ENCODE measurements at regions of chr4 and their contacts with region 1.

Region 1: GRCh38 chr4:183504064-183504929 is 561 bp upstream of the ING2 start:
- DNase-seq: peak; percentile 98
- H3K4me3 ChIP-seq: peak overlapping the region; percentile 75 to 92 (median 76)
- H3K27ac ChIP-seq: peak overlapping the region; percentile 86
- H3K4me1 ChIP-seq: peaks cover 18% of the 10 kb centered on the region
- H3K27me3 ChIP-seq: no peaks in the 10 kb centered on the region
- CTCF ChIP-seq: peak; percentile 1 to 4
- POLR2A ChIP-seq: peak; percentile 58

Region 2: GRCh38 chr4:183098723-183099536 is 405.4 kb before region 1 on chr4 and contains the start of gene WWC2:
- CTCF ChIA-PET with region 1: no interaction called
- POLR2A ChIA-PET with region 1: no interaction called
- dilution Hi-C with region 1: no loop called
- intact Hi-C with region 1: loop called (anchors 10 kb)
- DNase-seq: peak; percentile 94
- H3K4me3 ChIP-seq: peak within 1 kb of the TSS; percentile 80 to 90 (median 83)
- H3K27ac ChIP-seq: peak within 1 kb of the TSS; percentile 99
- H3K4me1 ChIP-seq: peaks cover 24% of the 10 kb centered on the region
- H3K27me3 ChIP-seq: no peaks in the 10 kb centered on the region
- CTCF ChIP-seq: no peak
- POLR2A ChIP-seq: peak; percentile 68
- total RNA-seq, gene WWC2: 51.8 and 52.2 TPM in 2 replicates

Region 3: GRCh38 chr4:183205709-183206108 is 298.6 kb before region 1 on chr4:
- CTCF ChIA-PET with region 1: no interaction called
- POLR2A ChIA-PET with region 1: no interaction called
- dilution Hi-C with region 1: no loop called
- intact Hi-C with region 1: no loop called
- DNase-seq: no peak
- H3K4me3 ChIP-seq: no peak overlapping the region
- H3K27ac ChIP-seq: no peak overlapping the region
- H3K4me1 ChIP-seq: peaks cover 6% of the 10 kb centered on the region
- H3K27me3 ChIP-seq: no peaks in the 10 kb centered on the region
- CTCF ChIP-seq: no peak
- POLR2A ChIP-seq: no peak

Region 4: DNA sequence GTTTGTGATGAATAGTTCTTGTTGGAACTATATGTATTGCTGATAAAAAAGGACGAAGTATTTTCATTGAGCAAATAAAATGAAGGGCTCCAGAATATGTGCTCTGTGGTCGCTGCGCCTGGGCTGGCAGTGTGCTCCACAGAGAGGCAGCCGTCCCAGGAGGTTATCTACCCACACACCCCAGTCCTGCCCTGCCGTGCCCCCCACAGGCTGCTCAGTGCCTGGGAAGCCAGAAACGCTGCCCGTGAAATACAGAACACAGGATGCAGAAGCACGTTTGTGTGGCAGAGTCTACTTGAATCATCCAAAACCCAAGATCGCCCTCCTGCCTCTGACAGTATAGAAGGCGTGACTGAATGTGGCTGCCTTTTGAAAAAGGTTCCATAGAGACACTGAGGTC is 185.6 kb before region 1 on chr4:
- CTCF ChIA-PET with region 1: no interaction called
- POLR2A ChIA-PET with region 1: no interaction called
- dilution Hi-C with region 1: no loop called
- intact Hi-C with region 1: no loop called
- DNase-seq: no peak
- H3K4me3 ChIP-seq: no peak overlapping the region
- H3K27ac ChIP-seq: no peak overlapping the region
- H3K4me1 ChIP-seq: no peaks in the 10 kb centered on the region
- H3K27me3 ChIP-seq: no peaks in the 10 kb centered on the region
- CTCF ChIP-seq: no peak
- POLR2A ChIP-seq: no peak

Region 5: DNA sequence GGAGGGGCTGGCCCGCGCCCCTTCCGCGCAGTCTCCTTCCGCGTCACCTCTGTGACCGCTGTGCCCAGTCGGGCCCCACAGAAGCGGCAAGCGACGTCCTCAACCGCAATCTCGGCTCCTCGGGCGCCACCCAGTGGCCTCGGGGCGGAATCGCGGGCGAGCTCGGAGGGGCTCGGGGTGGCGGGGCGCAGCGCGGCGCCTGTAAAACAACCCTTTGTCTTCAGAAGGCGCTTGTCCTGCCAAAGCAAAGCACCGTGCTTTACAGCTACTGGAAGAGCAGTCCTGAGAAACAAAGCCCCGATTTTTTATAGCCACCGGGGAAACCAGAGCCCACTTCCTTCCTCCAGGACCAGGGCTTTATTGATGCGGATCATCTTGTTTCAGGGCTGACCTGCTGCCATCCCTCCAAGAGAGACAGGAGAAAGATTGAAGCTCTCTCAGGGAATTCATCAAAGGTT is 97.1 kb before region 1 on chr4:
- CTCF ChIA-PET with region 1: no interaction called
- POLR2A ChIA-PET with region 1: no interaction called
- dilution Hi-C with region 1: no loop called
- intact Hi-C with region 1: loop called (anchors 1 kb)
- DNase-seq: peak; percentile 90
- H3K4me3 ChIP-seq: peak overlapping the region; percentile 28 to 70 (median 33)
- H3K27ac ChIP-seq: peak overlapping the region; percentile 39
- H3K4me1 ChIP-seq: peaks cover 7% of the 10 kb centered on the region
- H3K27me3 ChIP-seq: no peaks in the 10 kb centered on the region
- CTCF ChIP-seq: peak; percentile 91 to 96
- POLR2A ChIP-seq: no peak

Region 6: GRCh38 chr4:183618681-183619080 is 114.4 kb after region 1 on chr4:
- CTCF ChIA-PET with region 1: no interaction called
- POLR2A ChIA-PET with region 1: no interaction called
- dilution Hi-C with region 1: no loop called
- intact Hi-C with region 1: no loop called
- DNase-seq: no peak
- H3K4me3 ChIP-seq: no peak overlapping the region
- H3K27ac ChIP-seq: no peak overlapping the region
- H3K4me1 ChIP-seq: no peaks in the 10 kb centered on the region
- H3K27me3 ChIP-seq: no peaks in the 10 kb centered on the region
- CTCF ChIP-seq: no peak
- POLR2A ChIP-seq: no peak

Region 7: GRCh38 chr4:183659029-183659871 is 155.0 kb after region 1 on chr4 and contains the starts of genes RWDD4 and TRAPPC11:
- CTCF ChIA-PET with region 1: no interaction called
- POLR2A ChIA-PET with region 1: no interaction called
- dilution Hi-C with region 1: no loop called
- intact Hi-C with region 1: loop called (anchors 1 kb)
- DNase-seq: peak; percentile 99
- H3K4me3 ChIP-seq: peak within 1 kb of the TSS; percentile 51 to 69 (median 64)
- H3K27ac ChIP-seq: peak within 1 kb of the TSS; percentile 58
- H3K4me1 ChIP-seq: peaks cover 13% of the 10 kb centered on the region
- H3K27me3 ChIP-seq: no peaks in the 10 kb centered on the region
- CTCF ChIP-seq: peak in 1 of 2 donors; percentile 13
- POLR2A ChIP-seq: peak; percentile 53
- total RNA-seq, gene RWDD4: 16.6 and 16.8 TPM in 2 replicates
- total RNA-seq, gene TRAPPC11: 29.7 and 32.1 TPM in 2 replicates

Region 8: DNA sequence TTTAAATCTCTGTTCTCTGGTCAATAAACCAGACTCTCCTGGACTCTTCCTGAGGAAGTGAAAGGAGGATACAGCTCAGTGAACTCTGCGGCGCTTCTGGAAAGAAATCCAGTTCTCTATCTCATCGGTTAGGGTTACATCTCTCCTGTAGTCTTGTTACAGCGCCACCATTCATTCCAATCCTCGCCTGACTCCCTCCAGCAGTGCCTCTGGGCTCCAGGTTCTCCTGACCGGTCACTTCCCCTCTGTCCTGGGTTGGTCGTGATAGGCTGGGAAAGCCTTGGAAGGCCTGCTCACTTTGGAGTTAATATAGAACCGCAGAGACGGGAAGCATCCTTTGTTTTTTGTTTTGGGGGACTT is 303.8 kb after region 1 on chr4:
- CTCF ChIA-PET with region 1: no interaction called
- POLR2A ChIA-PET with region 1: no interaction called
- dilution Hi-C with region 1: no loop called
- intact Hi-C with region 1: no loop called
- DNase-seq: no peak
- H3K4me3 ChIP-seq: no peak overlapping the region
- H3K27ac ChIP-seq: no peak overlapping the region
- H3K4me1 ChIP-seq: no peaks in the 10 kb centered on the region
- H3K27me3 ChIP-seq: no peaks in the 10 kb centered on the region
- CTCF ChIP-seq: no peak
- POLR2A ChIP-seq: no peak

Region 9: GRCh38 chr4:185128272-185129119 is 1624.2 kb after region 1 on chr4:
- CTCF ChIA-PET with region 1: no interaction called
- POLR2A ChIA-PET with region 1: no interaction called
- dilution Hi-C with region 1: no loop called
- intact Hi-C with region 1: loop called (anchors 10 kb)
- DNase-seq: peak; percentile 18
- H3K4me3 ChIP-seq: peak overlapping the region; percentile 35 to 64 (median 52)
- H3K27ac ChIP-seq: no peak overlapping the region
- H3K4me1 ChIP-seq: peaks cover 15% of the 10 kb centered on the region
- H3K27me3 ChIP-seq: peaks cover 7% of the 10 kb centered on the region in 2 experiments
- CTCF ChIP-seq: peak in 1 of 2 donors; percentile 17
- POLR2A ChIP-seq: no peak

Measured in endothelial cell of umbilical vein (primary cell).